Activated T-helper 1 cell treated with anti-CD3 and anti-CD28 coated beads, Interleukin-12 subunit alpha, Interleukin-12 subunit beta, Interleukin-2, Interleukin-4 antibody, amounts not matched to agents 30 ng/mL and 10 ng/mL and 1 ng/mL, durations not matched to agents 14 hours and 24 hours and 36 hours (primary cell): ENCODE measurements at regions of chr6 and their contacts with region 1.

Region 1: GRCh38 chr6:139355172-139355571 is 19.3 kb downstream of the CITED2 start:
- DNase-seq: no peak
- H3K4me3 Mint-ChIP-seq: no peak overlapping the region
- H3K27ac Mint-ChIP-seq: peak overlapping the region; percentile 6
- H3K4me1 Mint-ChIP-seq: peaks cover 11% of the 10 kb centered on the region
- H3K27me3 Mint-ChIP-seq: no peaks in the 10 kb centered on the region

Region 2: DNA sequence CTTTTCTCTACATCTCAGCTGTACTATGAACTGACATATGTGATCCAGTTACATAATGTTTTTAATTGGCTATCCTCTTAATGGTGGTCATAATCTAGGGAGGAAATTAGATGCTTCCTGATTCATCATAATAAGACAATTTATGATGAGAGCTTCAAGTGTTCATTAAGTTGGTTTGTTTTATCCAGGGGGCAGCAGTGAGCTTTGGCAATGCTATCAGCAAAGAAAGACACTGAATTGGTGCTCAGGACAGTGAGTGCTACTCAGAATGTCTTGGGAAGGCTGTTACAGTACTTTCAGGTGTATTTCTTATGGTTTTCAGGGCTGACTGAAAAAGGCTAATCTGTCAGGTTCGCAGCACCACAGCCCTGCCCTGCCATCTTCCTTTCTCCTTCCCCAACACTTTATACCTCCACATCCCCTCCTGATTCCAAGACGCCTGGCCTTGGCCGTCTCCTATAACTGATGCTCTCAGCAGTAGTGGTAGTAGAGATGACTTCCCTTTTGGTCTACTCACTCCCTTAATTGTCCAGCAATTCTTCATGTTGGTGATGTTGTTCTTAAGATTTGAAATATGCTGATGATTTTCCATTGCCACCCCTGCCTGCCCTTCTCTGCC is 1555.1 kb before region 1 on chr6:
- intact Hi-C with region 1: no loop called
- DNase-seq: peak; percentile 35
- H3K4me3 Mint-ChIP-seq: no peak overlapping the region
- H3K27ac Mint-ChIP-seq: peak overlapping the region; percentile 14
- H3K4me1 Mint-ChIP-seq: peaks cover 67% of the 10 kb centered on the region
- H3K27me3 Mint-ChIP-seq: no peaks in the 10 kb centered on the region

Region 3: GRCh38 chr6:139308286-139308916 is 46.8 kb before region 1 on chr6:
- intact Hi-C with region 1: loop called (anchors 1 kb)
- DNase-seq: no peak
- H3K4me3 Mint-ChIP-seq: no peak overlapping the region
- H3K27ac Mint-ChIP-seq: peak overlapping the region; percentile 78
- H3K4me1 Mint-ChIP-seq: peaks cover 32% of the 10 kb centered on the region
- H3K27me3 Mint-ChIP-seq: peaks cover 6% of the 10 kb centered on the region